ENCODE measurements at regions of chr7 and their contacts with region 1.

Region 1: GRCh38 chr7:140479062-140479738 is at the start of gene MKRN1:
- DNase-seq: peak; percentile 99

Region 2: GRCh38 chr7:140463111-140463510 is 16.1 kb before region 1 on chr7:
- CTCF ChIA-PET with region 1: interaction called, 13 read pairs
- POLR2A ChIA-PET with region 1: no interaction called
- DNase-seq: no peak